Ascending aorta (tissue), 2 donors: ENCODE measurements at regions of chrX and their contacts with region 1.

Region 1: DNA sequence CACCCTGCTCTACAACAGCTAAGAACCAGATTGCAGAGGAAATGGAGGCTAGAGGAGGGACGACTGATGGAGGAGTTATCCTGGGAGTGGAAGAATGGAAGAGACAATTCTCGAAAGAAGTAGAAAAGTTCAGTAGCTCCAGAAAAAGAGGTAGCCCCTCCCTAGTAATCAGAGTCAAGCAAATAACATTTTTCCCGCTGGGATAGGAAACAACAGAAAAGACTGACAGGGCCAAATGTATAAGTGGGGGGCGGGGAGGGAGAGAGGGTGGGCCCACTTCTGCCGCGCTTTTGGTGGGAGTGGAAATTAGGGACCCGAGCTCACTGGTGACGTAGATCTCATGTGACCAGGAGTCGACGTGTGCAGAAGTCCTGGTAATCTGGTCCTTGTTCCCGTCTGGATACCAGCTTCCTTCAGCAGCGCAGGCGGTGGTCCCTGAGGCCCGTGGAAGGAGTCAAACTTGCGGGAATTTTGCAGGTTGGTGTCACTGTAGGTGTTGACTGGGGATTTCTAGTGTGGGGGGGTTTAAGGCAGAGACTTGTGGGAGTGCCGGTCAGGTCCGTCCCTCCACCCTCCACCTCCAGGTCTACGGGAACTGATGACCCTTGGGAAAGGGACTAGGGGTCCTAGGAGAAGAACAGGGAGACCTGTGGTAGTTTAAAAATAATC is at the start of gene TCEAL9:
- DNase-seq: peak in 1 of 2 donors; percentile 79
- H3K4me3 ChIP-seq: peak within 1 kb of the TSS; percentile 68 to 72
- H3K27ac ChIP-seq: peak within 1 kb of the TSS; percentile 86 to 89
- H3K4me1 ChIP-seq: no peaks in the 10 kb centered on the region
- H3K27me3 ChIP-seq: no peaks in the 10 kb centered on the region
- CTCF ChIP-seq: no peak
- total RNA-seq, gene TCEAL9: 20.9 TPM

Region 2: GRCh38 chrX:103376118-103376978 is 20.1 kb after region 1 on chrX and contains the start of gene BEX3:
- intact Hi-C with region 1: loop called (anchors 2 kb)
- DNase-seq: peak in 1 of 2 donors; percentile 74
- H3K4me3 ChIP-seq: peak within 1 kb of the TSS; percentile 65 to 78
- H3K27ac ChIP-seq: peak within 1 kb of the TSS; percentile 78 to 79
- H3K4me1 ChIP-seq: no peaks in the 10 kb centered on the region
- H3K27me3 ChIP-seq: no peaks in the 10 kb centered on the region
- CTCF ChIP-seq: no peak
- total RNA-seq, gene BEX3: 32.1 TPM

Region 3: DNA sequence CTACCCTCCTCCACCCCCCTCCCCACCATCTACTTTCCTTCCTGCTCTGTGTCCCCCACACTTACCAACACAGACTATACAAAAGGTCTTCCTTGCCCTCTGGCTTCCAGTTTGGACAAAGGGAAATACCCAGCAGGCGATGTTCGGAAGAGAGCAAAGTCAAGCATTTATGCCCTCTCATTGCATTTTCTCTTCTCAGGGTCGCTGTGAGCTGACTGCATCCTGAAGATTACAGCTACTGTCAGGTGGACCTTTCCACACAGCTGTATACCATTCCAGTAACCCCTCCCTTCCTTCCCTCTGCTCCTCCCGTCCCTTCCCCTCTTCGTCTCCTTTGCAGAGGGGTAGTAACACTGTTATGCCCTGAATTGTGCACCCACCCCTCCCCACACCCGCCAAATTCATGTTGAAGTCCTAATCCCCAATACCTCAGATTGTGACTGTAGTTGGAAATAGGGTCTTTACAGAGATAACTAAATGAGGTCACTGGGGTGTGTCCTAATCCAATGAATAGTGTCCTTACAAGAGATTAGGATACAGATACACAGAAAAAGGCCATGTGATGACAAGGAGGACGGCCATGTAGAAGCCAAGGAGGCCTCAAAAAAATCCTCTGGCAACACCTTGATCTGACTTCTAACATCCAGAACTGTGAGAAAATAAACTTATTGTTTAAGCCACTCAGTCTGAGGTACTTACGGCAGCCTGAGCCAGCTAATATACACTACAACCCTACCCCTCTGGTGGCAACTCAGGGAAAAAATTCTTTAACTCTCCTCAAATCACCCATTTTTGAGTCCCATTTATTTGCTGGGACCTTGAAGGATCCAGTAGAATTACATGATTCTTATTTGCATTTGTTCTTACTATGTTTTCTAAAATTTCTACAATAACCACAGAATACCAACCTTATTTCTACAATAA is 318.5 kb after region 1 on chrX:
- intact Hi-C with region 1: no loop called
- DNase-seq: no peak
- H3K4me3 ChIP-seq: no peak overlapping the region
- H3K27ac ChIP-seq: no peak overlapping the region
- H3K4me1 ChIP-seq: no peaks in the 10 kb centered on the region
- H3K27me3 ChIP-seq: no peaks in the 10 kb centered on the region
- CTCF ChIP-seq: no peak